PC-9 (cell line): ENCODE measurements at regions of chr3 and their contacts with region 1.

Region 1: GRCh38 chr3:11719406-11720230 is 75.9 kb upstream of the VGLL4 start:
- DNase-seq: peak; percentile 79 to 97
- H3K4me3 ChIP-seq: peak overlapping the region; percentile 76
- H3K27ac ChIP-seq: peak overlapping the region; percentile 90
- H3K4me1 ChIP-seq: peaks cover 43% of the 10 kb centered on the region
- H3K27me3 ChIP-seq: no peaks in the 10 kb centered on the region
- CTCF ChIP-seq: no peak

Region 2: GRCh38 chr3:10992017-10992941 is 727.3 kb before region 1 on chr3 and contains the start of gene SLC6A1:
- CTCF ChIA-PET with region 1: no interaction called
- POLR2A ChIA-PET with region 1: no interaction called
- intact Hi-C with region 1: no loop called
- DNase-seq: no peak
- H3K4me3 ChIP-seq: no peak within 1 kb of the TSS
- H3K27ac ChIP-seq: no peak within 1 kb of the TSS
- H3K4me1 ChIP-seq: no peaks in the 10 kb centered on the region
- H3K27me3 ChIP-seq: peaks cover 93% of the 10 kb centered on the region
- CTCF ChIP-seq: no peak
- total RNA-seq, gene SLC6A1: not detected in 2 replicates

Region 3: DNA sequence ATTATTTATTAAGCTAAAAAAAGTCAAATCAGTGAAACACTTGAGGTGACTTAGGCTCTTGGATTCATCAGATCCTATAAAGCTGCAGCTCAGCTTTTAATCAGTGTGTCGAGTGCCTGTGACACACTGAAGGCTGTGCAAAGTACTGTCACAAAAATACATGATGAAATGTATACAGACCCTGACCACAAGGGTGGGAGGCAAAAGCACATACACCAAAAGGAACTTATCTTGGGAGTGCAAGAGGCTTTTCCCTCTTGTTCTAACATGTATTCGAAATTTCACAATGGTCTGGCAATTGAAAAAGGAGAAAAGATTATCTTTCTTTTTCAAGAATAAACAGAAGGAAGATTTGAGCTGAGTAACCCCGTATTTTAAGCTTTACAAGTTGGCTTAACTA is 111.8 kb before region 1 on chr3:
- CTCF ChIA-PET with region 1: no interaction called
- POLR2A ChIA-PET with region 1: interaction called, 31 read pairs
- intact Hi-C with region 1: no loop called
- DNase-seq: no peak
- H3K4me3 ChIP-seq: no peak overlapping the region
- H3K27ac ChIP-seq: no peak overlapping the region
- H3K4me1 ChIP-seq: peaks cover 2% of the 10 kb centered on the region
- H3K27me3 ChIP-seq: no peaks in the 10 kb centered on the region
- CTCF ChIP-seq: no peak

Region 4: GRCh38 chr3:11671648-11672100 is 47.9 kb before region 1 on chr3:
- CTCF ChIA-PET with region 1: no interaction called
- POLR2A ChIA-PET with region 1: no interaction called
- intact Hi-C with region 1: loop called (anchors 5 kb)
- DNase-seq: peak; percentile 34 to 78
- H3K4me3 ChIP-seq: no peak overlapping the region
- H3K27ac ChIP-seq: peak overlapping the region; percentile 63
- H3K4me1 ChIP-seq: peaks cover 16% of the 10 kb centered on the region
- H3K27me3 ChIP-seq: no peaks in the 10 kb centered on the region
- CTCF ChIP-seq: no peak

Region 5: GRCh38 chr3:11690863-11691767 is 28.5 kb before region 1 on chr3:
- CTCF ChIA-PET with region 1: no interaction called
- POLR2A ChIA-PET with region 1: no interaction called
- intact Hi-C with region 1: loop called (anchors 2 kb)
- DNase-seq: peak; percentile 27 to 73
- H3K4me3 ChIP-seq: no peak overlapping the region
- H3K27ac ChIP-seq: peak overlapping the region; percentile 65
- H3K4me1 ChIP-seq: peaks cover 20% of the 10 kb centered on the region
- H3K27me3 ChIP-seq: no peaks in the 10 kb centered on the region
- CTCF ChIP-seq: no peak

Region 6: DNA sequence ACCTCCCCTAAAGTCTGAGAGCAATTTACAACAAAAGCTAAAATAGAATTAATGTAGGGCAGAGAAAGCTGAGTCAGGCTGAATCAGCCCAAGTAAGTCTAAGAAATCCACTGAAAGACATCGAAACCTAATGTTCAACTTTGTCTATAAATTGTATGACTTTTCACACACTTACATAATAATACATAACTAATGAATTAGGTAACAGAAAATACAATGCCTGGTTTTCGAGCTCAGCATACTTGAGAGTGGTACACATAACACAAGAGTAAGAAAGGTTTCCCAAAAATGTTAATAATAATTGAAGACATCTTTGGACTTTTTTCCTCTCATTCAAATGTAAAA is 20.6 kb before region 1 on chr3:
- CTCF ChIA-PET with region 1: interaction called, 6 read pairs
- POLR2A ChIA-PET with region 1: no interaction called
- intact Hi-C with region 1: loop called (anchors 2 kb)
- DNase-seq: peak in 1 of 2 experiments; percentile 87
- H3K4me3 ChIP-seq: peak overlapping the region; percentile 2; the same call in 1 of the 2 replicates
- H3K27ac ChIP-seq: peak overlapping the region; percentile 96
- H3K4me1 ChIP-seq: peaks cover 38% of the 10 kb centered on the region
- H3K27me3 ChIP-seq: no peaks in the 10 kb centered on the region
- CTCF ChIP-seq: no peak

Region 7: DNA sequence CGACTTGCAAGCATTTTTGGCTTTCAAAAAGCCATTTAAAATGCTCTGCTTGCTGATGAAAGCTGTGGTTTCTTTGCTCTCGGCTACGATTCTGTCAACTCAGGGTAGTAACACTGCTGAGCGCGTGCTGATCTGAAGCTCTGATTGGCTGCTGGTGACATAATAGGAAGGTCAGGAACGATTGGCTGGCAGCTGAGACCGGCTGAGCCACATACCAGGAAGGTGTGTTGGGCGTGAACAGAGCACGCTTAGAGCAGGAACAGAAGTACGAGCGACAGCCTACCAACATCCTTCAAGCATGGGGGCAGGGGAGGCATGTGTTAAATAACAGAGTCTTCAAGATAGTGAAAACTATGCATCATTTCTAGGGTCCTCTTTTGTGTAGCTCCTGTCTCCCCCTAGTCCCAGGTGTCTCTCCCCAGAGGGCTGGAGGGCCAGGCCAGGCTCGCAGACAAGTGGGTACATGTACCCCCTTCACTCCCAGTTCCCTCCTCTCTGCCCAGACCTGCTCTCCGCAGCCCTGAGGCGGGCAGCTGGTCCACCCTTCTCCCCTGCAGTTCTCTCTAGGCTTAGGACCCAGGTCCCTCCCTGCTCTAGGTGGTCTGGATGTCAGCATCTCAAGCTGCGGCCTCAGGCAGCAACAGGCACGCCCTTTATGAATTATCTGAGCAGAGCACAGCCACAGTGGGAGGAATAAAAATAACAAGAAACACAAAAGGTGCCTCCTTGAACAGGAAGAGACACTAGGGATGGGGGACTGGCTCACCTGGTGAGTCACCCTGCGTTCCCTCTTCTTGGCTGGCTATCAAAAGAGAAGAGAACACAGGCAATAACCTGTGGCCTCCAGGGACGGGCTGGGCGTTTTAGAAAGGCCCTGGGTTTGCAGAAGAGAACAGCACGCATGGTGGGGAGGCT is 51.1 kb after region 1 on chr3:
- CTCF ChIA-PET with region 1: no interaction called
- POLR2A ChIA-PET with region 1: no interaction called
- intact Hi-C with region 1: loop called (anchors 1 kb)
- DNase-seq: peak; percentile 89 to 96
- H3K4me3 ChIP-seq: peak overlapping the region; percentile 47
- H3K27ac ChIP-seq: peak overlapping the region; percentile 96
- H3K4me1 ChIP-seq: peaks cover 43% of the 10 kb centered on the region
- H3K27me3 ChIP-seq: no peaks in the 10 kb centered on the region
- CTCF ChIP-seq: no peak

Region 8: DNA sequence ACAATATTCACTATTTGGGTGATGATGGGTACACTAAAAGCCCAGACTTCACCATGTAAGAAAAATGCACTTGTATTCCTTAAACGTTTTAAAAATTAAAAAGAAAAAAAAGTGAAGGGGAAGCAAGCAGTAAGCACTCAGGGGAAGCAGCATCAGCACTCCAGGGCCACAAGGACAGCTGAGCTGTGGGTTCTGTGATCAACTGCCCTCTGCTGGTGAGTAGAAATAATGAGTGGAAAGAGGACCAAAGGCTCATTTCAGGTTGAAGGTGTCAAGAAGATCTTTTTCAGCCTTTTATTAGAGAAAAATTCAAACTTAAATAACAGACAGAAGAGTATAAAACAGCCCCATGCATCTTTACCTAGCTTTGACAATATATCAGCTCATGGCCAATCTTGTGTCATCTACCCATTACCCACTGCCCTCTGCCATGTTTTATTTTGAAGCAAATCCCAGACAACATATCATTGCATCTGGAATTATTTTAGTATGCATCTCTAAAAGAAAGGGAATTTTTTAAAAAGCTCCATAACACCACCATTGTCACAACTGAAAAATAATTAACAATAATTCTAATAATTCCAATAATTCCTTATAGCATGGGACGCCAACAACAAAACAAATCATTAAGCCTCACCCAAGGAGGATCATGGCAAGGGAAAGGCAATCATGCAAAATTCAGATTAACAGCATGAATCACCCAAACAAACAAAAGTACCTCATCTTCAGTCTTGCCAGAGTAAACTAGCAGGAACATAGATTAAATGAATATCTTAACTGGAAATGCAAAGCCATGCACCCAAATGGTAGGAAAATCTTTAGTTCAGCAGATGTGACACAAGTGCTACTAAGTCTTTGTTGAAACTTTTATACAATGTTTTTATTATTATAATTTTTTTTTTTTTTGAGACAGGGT is 84.6 kb after region 1 on chr3:
- CTCF ChIA-PET with region 1: no interaction called
- POLR2A ChIA-PET with region 1: no interaction called
- intact Hi-C with region 1: loop called (anchors 5 kb)
- DNase-seq: peak; percentile 15 to 44
- H3K4me3 ChIP-seq: no peak overlapping the region
- H3K27ac ChIP-seq: no peak overlapping the region
- H3K4me1 ChIP-seq: peaks cover 2% of the 10 kb centered on the region; the same call in 1 of the 2 replicates
- H3K27me3 ChIP-seq: no peaks in the 10 kb centered on the region
- CTCF ChIP-seq: peak; percentile 84